H1 (cell line): ENCODE measurements at regions of chr18 and their contacts with region 1.

Region 1: DNA sequence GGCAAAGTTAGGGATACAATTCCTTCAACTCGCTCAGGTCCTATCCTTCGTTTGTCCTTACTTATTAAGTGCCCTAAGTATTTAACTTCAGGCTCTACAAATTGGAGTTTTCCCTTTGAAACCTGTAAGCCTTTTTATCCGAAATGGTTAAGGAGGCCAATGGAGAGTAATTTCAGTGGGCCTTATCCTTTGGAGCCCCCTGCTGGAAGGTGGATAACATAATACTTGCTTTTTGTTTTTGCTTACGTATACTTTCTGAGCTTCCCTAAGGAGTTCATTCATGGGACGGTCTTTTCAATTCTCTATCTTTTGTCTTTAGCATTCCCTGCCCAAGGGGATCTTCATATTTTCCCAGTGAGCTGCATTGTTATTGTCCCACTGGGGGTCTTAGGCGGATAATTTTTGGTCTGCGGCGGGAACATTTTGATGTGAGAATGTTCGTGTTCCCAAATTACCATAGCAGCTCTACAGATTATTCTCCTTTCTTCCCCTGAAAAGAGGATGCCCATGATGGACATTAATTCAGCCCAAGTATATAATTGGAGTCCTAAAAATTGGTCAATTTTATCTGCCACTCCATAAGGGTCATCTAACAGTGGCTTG is 34.4 kb upstream of the TRAPPC8 start:
- DNase-seq: peak; percentile 21 to 59
- H3K4me3 ChIP-seq: peak overlapping the region in 1 of 4 experiments; percentile 41; a peak in 1 of 8 replicates
- H3K27ac ChIP-seq: no peak overlapping the region
- H3K4me1 ChIP-seq: peaks cover 0 to 4% (median 0%) of the 10 kb centered on the region in 4 experiments; a peak in 1 of 7 replicates
- H3K27me3 ChIP-seq: no peaks in the 10 kb centered on the region
- CTCF ChIP-seq: peak in 2 of 3 experiments; percentile 65 to 71; a peak in 3 of 4 replicates
- EP300 ChIP-seq: no peak
- POLR2A ChIP-seq: no peak
- RAD21 ChIP-seq: peak; percentile 93

Region 2: GRCh38 chr18:31555971-31556747 is 421.2 kb before region 1 on chr18:
- CTCF ChIA-PET with region 1: interaction called, 22 read pairs
- POLR2A ChIA-PET with region 1: no interaction called
- DNase-seq: no peak
- H3K4me3 ChIP-seq: no peak overlapping the region
- H3K27ac ChIP-seq: no peak overlapping the region
- H3K4me1 ChIP-seq: peaks cover 1 to 9% (median 2%) of the 10 kb centered on the region in 4 experiments; a peak in 3 of 7 replicates
- H3K27me3 ChIP-seq: no peaks in the 10 kb centered on the region
- CTCF ChIP-seq: peak in 2 of 3 experiments; percentile 68; a peak in 3 of 4 replicates
- EP300 ChIP-seq: no peak
- POLR2A ChIP-seq: no peak
- RAD21 ChIP-seq: peak; percentile 92 to 94

Region 3: DNA sequence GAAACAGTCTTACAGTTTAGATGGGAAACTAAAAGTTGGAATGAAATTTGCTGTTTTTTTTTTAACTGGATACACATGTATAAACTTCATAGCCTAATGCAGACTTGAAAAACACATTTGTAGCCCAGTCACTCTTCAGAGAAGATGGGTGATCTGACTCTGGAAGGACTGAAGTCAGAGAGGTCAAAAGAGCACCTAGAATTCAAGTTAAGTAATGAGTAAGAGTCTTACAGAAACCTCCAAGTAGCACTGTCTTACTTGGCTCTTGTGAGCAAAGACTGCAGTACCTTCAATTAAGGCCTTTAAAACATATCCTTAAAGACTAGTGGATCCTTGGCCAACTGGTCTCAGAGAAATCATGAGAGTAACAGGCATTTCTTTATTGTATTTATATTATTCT is 76.3 kb before region 1 on chr18:
- CTCF ChIA-PET with region 1: interaction called, 14 read pairs
- POLR2A ChIA-PET with region 1: no interaction called
- DNase-seq: no peak
- H3K4me3 ChIP-seq: no peak overlapping the region
- H3K27ac ChIP-seq: no peak overlapping the region
- H3K4me1 ChIP-seq: no peaks in the 10 kb centered on the region
- H3K27me3 ChIP-seq: no peaks in the 10 kb centered on the region
- CTCF ChIP-seq: no peak
- EP300 ChIP-seq: no peak
- POLR2A ChIP-seq: no peak
- RAD21 ChIP-seq: no peak

Region 4: GRCh38 chr18:31942999-31943865 is 34.1 kb before region 1 on chr18 and contains the start of gene TRAPPC8:
- CTCF ChIA-PET with region 1: interaction called, 25 read pairs
- POLR2A ChIA-PET with region 1: interaction called, 5 read pairs
- DNase-seq: peak; percentile 93 to 94
- H3K4me3 ChIP-seq: peak within 1 kb of the TSS; percentile 67 to 98 (median 98)
- H3K27ac ChIP-seq: peak within 1 kb of the TSS; percentile 93
- H3K4me1 ChIP-seq: peaks cover 0 to 10% (median 4%) of the 10 kb centered on the region in 4 experiments; a peak in 4 of 7 replicates
- H3K27me3 ChIP-seq: no peaks in the 10 kb centered on the region
- CTCF ChIP-seq: peak in 2 of 3 experiments; percentile 35 to 37; a peak in 3 of 4 replicates
- EP300 ChIP-seq: no peak; a peak in 1 of 3 replicates
- POLR2A ChIP-seq: peak; percentile 92 to 98
- RAD21 ChIP-seq: peak in 1 of 2 experiments; percentile 30; a peak in 1 of 4 replicates
- total RNA-seq, gene TRAPPC8: 43.6 and 49.9 TPM in 2 replicates

Region 5: GRCh38 chr18:31954349-31954748 is 23.0 kb before region 1 on chr18:
- CTCF ChIA-PET with region 1: interaction called, 11 read pairs
- POLR2A ChIA-PET with region 1: no interaction called
- DNase-seq: no peak
- H3K4me3 ChIP-seq: no peak overlapping the region
- H3K27ac ChIP-seq: no peak overlapping the region
- H3K4me1 ChIP-seq: no peaks in the 10 kb centered on the region; a peak in 2 of 7 replicates
- H3K27me3 ChIP-seq: no peaks in the 10 kb centered on the region
- CTCF ChIP-seq: no peak
- EP300 ChIP-seq: no peak
- POLR2A ChIP-seq: no peak
- RAD21 ChIP-seq: no peak

Region 6: DNA sequence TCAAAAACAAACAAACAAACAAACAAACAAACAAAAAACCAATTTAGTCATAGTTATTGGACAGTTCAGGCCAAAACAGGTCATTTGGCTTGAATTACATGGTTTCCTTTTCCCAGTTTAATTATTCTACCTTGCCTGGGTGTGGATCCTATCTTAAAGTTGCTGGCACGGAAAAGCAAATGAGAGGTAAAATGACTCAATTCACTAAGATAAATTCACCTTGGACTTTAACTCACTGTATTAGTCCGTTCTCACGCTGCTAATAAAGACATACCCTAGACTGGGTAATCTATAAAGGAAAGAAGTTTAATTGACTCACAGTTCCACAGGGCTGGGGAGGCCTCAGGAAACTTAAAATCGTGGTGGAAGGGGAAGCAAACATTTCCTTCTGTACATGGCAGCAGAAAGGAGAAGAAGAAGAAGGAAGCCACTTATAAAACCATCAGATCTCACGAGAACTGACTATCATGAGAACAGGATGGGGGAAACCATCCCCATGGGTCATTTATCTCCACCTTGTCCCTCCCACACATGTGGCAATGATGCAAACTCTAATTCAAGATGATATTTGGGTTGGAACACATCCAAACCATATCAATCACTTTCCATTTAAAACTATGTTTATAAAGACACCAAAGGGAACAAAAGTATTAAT is 11.9 kb before region 1 on chr18:
- CTCF ChIA-PET with region 1: interaction called, 19 read pairs
- POLR2A ChIA-PET with region 1: no interaction called
- DNase-seq: no peak
- H3K4me3 ChIP-seq: no peak overlapping the region
- H3K27ac ChIP-seq: no peak overlapping the region
- H3K4me1 ChIP-seq: no peaks in the 10 kb centered on the region
- H3K27me3 ChIP-seq: no peaks in the 10 kb centered on the region; a peak in 1 of 7 replicates
- CTCF ChIP-seq: no peak
- EP300 ChIP-seq: no peak
- POLR2A ChIP-seq: no peak
- RAD21 ChIP-seq: no peak

Region 7: DNA sequence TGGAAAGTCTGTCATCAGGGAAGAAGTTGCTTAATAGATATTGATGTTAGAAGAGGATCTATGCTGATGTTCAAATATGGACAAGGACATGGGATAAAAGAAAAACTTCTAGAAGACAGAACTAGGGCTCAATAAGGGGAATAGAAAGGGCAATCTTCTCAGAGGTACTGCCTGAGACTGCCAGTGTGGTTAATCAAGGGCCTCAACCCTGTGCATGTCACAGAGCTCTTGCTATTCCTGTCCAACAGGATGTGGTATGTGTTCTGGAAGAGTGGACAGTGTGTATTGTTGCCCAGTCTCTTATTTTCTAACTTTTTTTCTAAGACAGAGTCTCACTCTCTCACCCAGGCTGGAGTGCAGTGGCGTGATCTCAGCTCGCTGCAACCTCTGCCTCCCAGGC is 13.5 kb after region 1 on chr18:
- CTCF ChIA-PET with region 1: interaction called, 17 read pairs
- POLR2A ChIA-PET with region 1: interaction called, 3 read pairs
- DNase-seq: no peak
- H3K4me3 ChIP-seq: no peak overlapping the region
- H3K27ac ChIP-seq: no peak overlapping the region
- H3K4me1 ChIP-seq: peaks cover 0 to 4% (median 2%) of the 10 kb centered on the region in 4 experiments; a peak in 2 of 7 replicates
- H3K27me3 ChIP-seq: no peaks in the 10 kb centered on the region
- CTCF ChIP-seq: no peak
- EP300 ChIP-seq: no peak
- POLR2A ChIP-seq: no peak
- RAD21 ChIP-seq: no peak